A549 (cell line): ENCODE measurements at regions of chr13 and their contacts with region 1.

Region 1: DNA sequence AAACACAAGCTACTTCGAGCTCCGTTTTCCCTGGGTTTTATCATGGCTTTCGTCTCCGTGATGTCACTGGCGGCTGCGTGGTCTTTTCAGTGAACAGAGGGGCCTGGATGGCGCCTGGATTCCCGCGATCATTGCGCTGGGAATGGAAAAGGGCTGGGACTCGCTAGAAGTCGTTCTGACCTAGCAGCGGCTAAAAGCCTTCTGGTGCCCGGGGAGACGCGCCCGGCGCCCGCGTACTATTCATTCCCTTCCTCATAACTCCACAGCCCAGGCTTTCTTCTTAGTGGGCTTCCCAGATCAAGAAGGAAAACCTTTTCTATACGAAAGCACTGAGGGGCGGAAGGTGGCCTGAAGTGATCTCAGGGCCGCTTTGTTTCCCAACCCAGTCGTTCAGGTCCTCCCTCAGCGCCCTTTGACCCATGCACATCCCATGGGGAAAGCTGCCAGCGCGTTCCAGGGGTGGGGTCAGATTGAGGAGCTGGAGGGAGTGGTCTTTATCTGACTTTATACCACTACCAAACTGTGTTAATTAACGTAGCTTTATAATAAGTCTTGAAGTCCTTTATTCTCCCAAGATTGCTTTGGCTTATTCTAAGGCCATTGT is 96.6 kb downstream of the ELF1 start:
- DNase-seq: no peak
- ATAC-seq: no peak
- H3K4me3 ChIP-seq: no peak overlapping the region
- H3K27ac ChIP-seq: no peak overlapping the region
- H3K4me1 ChIP-seq: 0 out of 3 replicates have a peak, but pooled peaks cover 8% of the 10 kb centered on the region
- CTCF ChIP-seq: no peak
- EP300 ChIP-seq: no peak
- POLR2A ChIP-seq: no peak
- RAD21 ChIP-seq: no peak

Region 2: GRCh38 chr13:40371531-40372125 is 550.9 kb before region 1 on chr13:
- CTCF ChIA-PET with region 1: no interaction called
- POLR2A ChIA-PET with region 1: no interaction called
- DNase-seq: no peak
- ATAC-seq: no peak
- H3K4me3 ChIP-seq: no peak overlapping the region
- H3K27ac ChIP-seq: no peak overlapping the region
- H3K4me1 ChIP-seq: no peaks in the 10 kb centered on the region
- CTCF ChIP-seq: no peak
- EP300 ChIP-seq: no peak
- POLR2A ChIP-seq: no peak
- RAD21 ChIP-seq: no peak

Region 3: DNA sequence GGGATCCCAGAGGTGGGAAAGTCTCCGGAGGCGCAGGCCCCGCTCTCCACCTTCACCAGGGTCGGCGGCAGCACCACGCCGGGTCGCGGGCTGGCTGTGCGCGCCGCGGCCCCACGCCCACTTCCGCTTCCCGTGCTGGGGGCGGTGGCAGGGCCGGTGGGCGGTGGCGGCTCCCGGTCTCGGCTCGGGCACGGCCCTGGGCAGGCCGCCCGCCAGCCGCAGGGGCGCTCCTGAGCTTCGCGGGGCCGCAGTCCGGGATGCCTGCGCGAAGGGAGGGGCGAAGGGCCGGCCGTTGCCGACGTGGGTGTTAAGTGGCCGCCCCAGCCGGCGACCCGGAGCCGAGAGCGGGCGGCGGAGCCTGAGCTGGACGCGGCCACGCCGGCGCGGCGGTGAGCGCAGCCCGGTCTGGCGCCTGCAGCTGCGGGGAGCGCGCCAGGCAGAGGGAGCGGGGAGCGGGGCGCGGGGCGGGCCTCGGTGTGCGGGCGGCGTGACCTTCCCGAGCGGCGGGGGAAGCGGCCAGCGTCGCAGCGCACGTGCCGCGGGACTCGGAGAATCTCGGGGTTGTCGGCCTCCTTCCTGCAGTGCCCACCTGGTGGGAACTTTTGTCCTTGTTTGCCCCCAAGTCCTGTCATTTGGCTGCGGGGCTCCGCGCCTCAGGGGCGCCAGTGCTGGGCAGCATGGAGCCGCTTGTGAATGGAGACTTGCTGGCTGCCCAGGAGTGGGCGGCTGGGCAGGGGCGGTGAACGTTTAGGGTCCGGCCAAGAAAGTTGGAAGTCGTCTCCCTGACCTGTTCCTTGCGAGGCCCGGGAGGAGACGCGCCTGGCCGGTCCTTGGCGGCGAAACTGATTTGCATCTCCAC is 133.0 kb before region 1 on chr13 and contains the start of gene SLC25A15:
- CTCF ChIA-PET with region 1: interaction called, 5 read pairs
- POLR2A ChIA-PET with region 1: interaction called, 14 read pairs
- DNase-seq: peak; percentile 58 to 82
- ATAC-seq: peak; percentile 97 to 98
- H3K4me3 ChIP-seq: peak within 1 kb of the TSS; percentile 65
- H3K27ac ChIP-seq: peak within 1 kb of the TSS; percentile 85 to 100
- H3K4me1 ChIP-seq: peaks cover 13% of the 10 kb centered on the region; the same call in 2 of the 3 replicates
- CTCF ChIP-seq: peak; percentile 38
- EP300 ChIP-seq: no peak
- POLR2A ChIP-seq: peak; percentile 60
- RAD21 ChIP-seq: peak; percentile 16 to 41; a peak in 3 of 5 replicates
- polyA plus RNA-seq, gene SLC25A15: 17.8 and 23.3 TPM in 2 replicates

Region 4: DNA sequence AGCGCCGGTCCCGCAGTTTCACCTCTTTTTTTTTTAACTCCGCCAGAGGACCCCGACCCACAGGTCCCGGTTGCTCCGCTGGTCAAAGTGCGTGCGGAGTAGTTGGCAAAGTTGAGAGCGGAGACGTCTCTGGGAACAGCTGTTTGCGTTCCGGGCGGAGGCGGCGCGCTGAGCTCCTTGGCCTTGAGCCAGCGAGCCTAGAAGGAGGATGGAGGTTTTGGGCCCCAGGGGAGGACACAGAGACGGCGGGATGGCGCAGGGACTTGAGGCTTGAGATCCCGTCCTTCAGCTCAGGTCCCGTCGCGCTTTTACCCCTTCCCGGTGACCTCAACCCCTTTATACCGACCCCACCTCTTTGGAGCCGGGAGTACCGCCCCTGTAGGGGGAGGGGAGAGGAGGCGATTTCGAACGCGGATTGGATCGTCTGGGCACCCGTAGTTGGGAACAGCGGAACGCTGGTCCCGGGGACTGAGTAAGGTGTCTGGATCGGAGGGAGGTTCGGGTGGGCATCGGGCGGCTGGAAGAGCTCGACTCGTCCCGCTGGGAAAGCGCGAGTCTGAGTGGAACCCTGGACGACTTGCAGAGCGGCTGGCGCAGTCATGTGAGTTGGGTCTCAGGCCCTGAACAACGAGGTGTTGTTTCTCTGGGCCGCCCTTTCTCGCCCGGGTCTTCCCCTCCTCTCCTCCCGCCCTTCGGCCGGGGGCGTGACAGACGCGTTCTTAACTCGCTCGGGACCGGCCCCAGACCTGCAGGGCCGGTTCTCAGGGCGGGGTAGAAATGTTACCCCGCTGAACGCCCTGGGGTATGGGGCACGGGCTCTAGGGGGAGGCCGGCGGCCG is 138.8 kb after region 1 on chr13 and contains the start of gene WBP4:
- CTCF ChIA-PET with region 1: no interaction called
- POLR2A ChIA-PET with region 1: interaction called, 10 read pairs
- DNase-seq: peak; percentile 75 to 95
- ATAC-seq: peak; percentile 80 to 87
- H3K4me3 ChIP-seq: peak within 1 kb of the TSS; percentile 88
- H3K27ac ChIP-seq: peak within 1 kb of the TSS; percentile 97 to 99
- H3K4me1 ChIP-seq: peaks cover 35% of the 10 kb centered on the region; the same call in 2 of the 3 replicates
- CTCF ChIP-seq: no peak
- EP300 ChIP-seq: no peak
- POLR2A ChIP-seq: peak; percentile 80
- RAD21 ChIP-seq: no peak
- polyA plus RNA-seq, gene WBP4: 7.5 and 13.9 TPM in 2 replicates

Region 5: GRCh38 chr13:41411522-41411921 is 489.0 kb after region 1 on chr13:
- CTCF ChIA-PET with region 1: no interaction called
- POLR2A ChIA-PET with region 1: no interaction called
- DNase-seq: peak in 1 of 2 experiments; percentile 29
- ATAC-seq: peak; percentile 68 to 78; a peak in 5 of 6 replicates
- H3K4me3 ChIP-seq: no peak overlapping the region
- H3K27ac ChIP-seq: no peak overlapping the region
- H3K4me1 ChIP-seq: no peaks in the 10 kb centered on the region
- CTCF ChIP-seq: peak; percentile 36
- EP300 ChIP-seq: no peak
- POLR2A ChIP-seq: no peak
- RAD21 ChIP-seq: peak; percentile 56 to 60; a peak in 4 of 5 replicates